ENCODE measurements at regions of chr2 and their contacts with region 1.

Region 1: DNA sequence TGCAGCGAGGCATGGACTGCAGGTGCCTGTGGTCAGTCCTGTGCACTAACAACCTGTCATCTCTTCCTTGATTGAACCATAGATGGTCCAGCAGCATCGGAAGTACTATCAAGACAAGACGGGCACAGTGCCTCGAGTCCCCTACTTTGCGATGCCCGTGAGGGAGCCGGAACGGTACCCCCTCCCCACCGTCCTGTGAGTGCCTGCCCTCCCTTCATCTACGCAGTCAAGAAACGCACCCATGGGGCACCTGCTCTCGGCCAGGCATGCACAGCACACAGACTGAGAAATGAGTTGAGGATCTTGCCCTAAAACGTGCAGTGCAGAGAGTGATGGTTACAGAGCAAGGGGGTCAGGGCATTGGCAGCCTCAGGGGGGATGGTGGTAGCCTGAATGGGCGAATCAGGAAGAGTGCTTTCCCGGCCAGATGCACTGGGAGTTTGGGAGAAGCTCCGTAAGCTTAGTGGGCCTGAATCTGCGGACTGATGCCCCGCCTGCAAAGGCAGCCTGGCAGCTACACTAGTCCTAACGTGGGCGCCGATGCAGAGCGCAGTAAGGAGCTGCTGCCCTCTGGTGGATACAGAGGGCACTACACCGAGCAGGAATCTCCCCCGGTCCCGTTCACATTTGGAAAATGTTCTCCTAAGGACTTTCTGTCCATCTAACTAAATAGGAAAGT is 63.6 kb downstream of the CIB4 start:
- DNase-seq: peak; percentile 94
- H3K4me3 ChIP-seq: peak overlapping the region in 1 of 2 experiments; percentile 2; a peak in 1 of 4 replicates
- H3K27ac ChIP-seq: no peak overlapping the region
- H3K4me1 ChIP-seq: peaks cover 0 to 3% of the 10 kb centered on the region in 2 experiments; a peak in 1 of 4 replicates
- H3K27me3 ChIP-seq: peaks cover 67% of the 10 kb centered on the region
- CTCF ChIP-seq: peak; percentile 99
- EP300 ChIP-seq: no peak
- RAD21 ChIP-seq: peak; percentile 98

Region 2: DNA sequence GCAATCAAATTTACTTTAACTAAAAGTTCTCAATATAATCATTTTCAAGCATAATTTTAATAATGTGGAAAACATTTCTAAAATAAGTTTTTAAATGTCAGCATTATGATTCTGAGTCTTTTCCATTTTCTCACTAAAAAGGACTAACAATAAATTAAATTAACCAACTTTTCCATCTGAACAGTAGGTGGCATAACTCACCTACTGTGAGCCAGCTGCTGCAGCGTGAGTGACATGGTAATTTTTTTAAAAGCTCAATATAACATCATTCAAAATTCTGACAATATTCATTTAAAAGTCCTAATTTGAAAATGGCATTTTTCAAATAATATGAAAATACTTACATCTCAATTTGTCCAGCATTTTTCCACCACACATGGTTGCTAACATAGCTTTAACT is 970.7 kb before region 1 on chr2:
- CTCF ChIA-PET with region 1: no interaction called
- POLR2A ChIA-PET with region 1: no interaction called
- DNase-seq: peak; percentile 39
- H3K4me3 ChIP-seq: no peak overlapping the region
- H3K27ac ChIP-seq: no peak overlapping the region
- H3K4me1 ChIP-seq: peaks cover 0 to 4% of the 10 kb centered on the region in 2 experiments; a peak in 1 of 4 replicates
- H3K27me3 ChIP-seq: no peaks in the 10 kb centered on the region
- CTCF ChIP-seq: peak; percentile 92
- EP300 ChIP-seq: no peak
- RAD21 ChIP-seq: peak; percentile 86

Region 3: DNA sequence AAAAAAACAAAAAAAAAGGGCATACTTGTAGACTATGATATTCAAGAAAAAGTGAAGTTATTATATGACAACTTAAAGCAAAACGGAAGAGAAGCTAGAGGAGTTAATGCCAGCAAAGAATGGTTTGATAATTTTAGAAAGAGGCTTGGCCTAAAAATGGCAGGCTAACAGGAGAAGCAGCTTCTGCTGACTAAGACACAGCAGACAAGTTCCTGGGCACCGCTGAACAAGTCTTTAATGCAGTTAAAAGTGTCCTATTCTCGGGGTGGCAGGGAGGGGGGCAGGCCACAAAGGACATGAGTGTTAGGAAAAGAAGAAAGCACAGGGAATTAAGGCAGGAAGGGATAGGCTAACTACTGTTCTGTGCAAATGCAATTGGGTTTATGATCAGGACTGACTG is 454.9 kb before region 1 on chr2:
- CTCF ChIA-PET with region 1: no interaction called
- POLR2A ChIA-PET with region 1: no interaction called
- DNase-seq: no peak
- H3K4me3 ChIP-seq: no peak overlapping the region
- H3K27ac ChIP-seq: no peak overlapping the region
- H3K4me1 ChIP-seq: peaks cover 0 to 4% of the 10 kb centered on the region in 2 experiments; a peak in 1 of 4 replicates
- H3K27me3 ChIP-seq: no peaks in the 10 kb centered on the region
- CTCF ChIP-seq: no peak
- EP300 ChIP-seq: no peak
- RAD21 ChIP-seq: no peak

Region 4: DNA sequence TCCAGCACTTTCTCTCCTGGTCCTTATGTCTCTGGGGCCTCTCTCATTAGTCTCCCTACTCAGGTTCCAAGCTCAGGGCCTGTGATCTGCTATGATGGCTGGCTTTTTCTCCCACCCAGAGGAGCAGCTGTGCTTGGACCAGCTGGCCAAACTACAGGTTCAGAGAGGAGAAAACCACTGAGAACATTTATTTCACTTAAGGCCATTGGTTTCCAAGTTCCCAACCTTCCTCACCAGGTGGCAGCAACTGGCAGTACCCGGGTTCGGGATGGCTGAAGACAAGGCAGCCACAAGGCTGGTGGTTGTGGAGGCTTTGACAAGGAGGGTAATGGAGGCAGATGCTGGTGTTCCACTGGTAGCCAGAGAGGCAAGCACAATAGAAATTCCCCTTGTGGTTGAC is 261.5 kb before region 1 on chr2:
- CTCF ChIA-PET with region 1: interaction called, 48 read pairs
- POLR2A ChIA-PET with region 1: no interaction called
- DNase-seq: peak; percentile 54
- H3K4me3 ChIP-seq: no peak overlapping the region
- H3K27ac ChIP-seq: no peak overlapping the region
- H3K4me1 ChIP-seq: peaks cover 0 to 5% of the 10 kb centered on the region in 2 experiments; a peak in 1 of 4 replicates
- H3K27me3 ChIP-seq: peaks cover 10% of the 10 kb centered on the region; the same call in 1 of the 2 replicates
- CTCF ChIP-seq: peak; percentile 39
- EP300 ChIP-seq: no peak
- RAD21 ChIP-seq: peak; percentile 51

Region 5: DNA sequence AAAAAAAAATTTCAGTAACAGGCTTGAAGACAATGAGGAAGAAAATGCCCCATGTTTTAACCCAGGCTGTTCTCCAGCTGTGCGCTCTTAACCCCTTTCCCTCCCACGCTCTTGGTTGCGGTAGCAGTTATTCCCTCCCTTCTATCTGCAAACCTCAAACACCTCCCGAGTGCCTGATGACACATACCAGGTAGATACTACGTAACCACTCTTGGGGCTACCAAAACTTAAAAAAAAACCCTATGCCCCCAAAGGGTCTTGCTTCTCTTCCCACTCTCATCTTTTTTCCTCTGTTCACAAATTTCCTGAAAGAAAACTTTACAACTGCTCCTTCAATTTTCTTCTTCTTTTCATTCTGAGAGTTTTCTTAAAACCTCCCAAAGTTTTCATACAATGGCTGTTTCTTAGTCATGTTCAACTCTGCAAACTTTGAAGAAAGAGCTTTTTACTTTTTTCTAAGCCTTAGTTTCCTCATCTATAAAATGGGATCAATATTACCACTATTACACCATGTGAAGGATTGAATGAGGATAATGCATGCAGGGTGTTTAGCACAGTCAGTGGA is 180.8 kb before region 1 on chr2:
- CTCF ChIA-PET with region 1: interaction called, 17 read pairs
- POLR2A ChIA-PET with region 1: no interaction called
- DNase-seq: no peak
- H3K4me3 ChIP-seq: no peak overlapping the region
- H3K27ac ChIP-seq: peak overlapping the region in 1 of 2 experiments; percentile 48; a peak in 1 of 4 replicates
- H3K4me1 ChIP-seq: peaks cover 0 to 38% of the 10 kb centered on the region in 2 experiments; a peak in 2 of 4 replicates
- H3K27me3 ChIP-seq: no peaks in the 10 kb centered on the region
- CTCF ChIP-seq: no peak
- EP300 ChIP-seq: no peak
- RAD21 ChIP-seq: no peak

Region 6: GRCh38 chr2:26521054-26521912 is 56.3 kb before region 1 on chr2:
- CTCF ChIA-PET with region 1: interaction called, 16 read pairs
- POLR2A ChIA-PET with region 1: no interaction called
- DNase-seq: peak; percentile 65
- H3K4me3 ChIP-seq: no peak overlapping the region
- H3K27ac ChIP-seq: no peak overlapping the region
- H3K4me1 ChIP-seq: peaks cover 6 to 7% of the 10 kb centered on the region in 2 experiments; a peak in 2 of 4 replicates
- H3K27me3 ChIP-seq: peaks cover 16% of the 10 kb centered on the region
- CTCF ChIP-seq: peak; percentile 46; the same call in 1 of the 2 replicates
- EP300 ChIP-seq: no peak
- RAD21 ChIP-seq: peak; percentile 37; the same call in 1 of the 2 replicates

Region 7: DNA sequence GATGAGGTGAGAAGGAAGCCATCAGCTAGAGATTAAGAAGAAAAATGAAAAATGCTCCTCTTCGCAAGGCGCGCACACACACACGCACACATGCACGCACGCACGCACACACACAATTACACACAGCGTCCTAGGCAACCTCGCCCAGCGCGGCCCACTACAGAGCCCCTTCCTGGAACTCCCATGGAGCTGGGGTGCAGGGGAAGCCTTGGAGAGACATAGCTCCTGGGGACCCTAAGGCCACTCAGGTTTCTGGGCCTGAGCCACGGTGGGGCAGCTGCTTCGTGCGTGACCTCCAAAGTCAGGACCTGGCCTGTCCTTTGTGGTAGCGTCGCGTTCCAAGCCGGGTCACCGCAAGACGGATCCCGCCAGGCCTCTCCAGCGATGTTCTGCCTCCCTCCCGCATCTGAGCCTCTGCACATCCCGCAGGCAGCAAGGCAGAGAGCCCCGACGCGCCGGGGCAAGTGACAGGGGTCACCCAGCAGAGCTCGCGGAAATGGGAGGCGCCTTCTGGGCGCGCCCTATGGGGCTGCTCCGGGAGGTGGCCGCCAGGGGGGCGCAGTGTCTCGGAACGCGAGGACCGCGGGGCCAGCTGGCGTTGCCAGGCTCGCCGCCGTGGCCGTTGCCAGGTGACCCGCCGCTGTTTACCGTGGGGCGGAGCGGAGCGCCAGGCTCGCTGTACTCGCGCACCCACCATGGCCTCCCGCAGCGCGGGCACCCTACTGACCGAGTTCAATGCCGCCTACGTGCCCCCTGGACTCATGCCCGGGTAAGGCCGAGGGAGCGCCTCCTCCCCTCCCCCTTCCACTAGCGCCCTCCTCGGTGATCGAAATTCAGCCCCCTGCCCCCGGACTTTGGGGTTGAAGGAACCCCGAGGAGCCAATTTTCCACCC is 15.4 kb before region 1 on chr2:
- CTCF ChIA-PET with region 1: interaction called, 153 read pairs
- POLR2A ChIA-PET with region 1: no interaction called
- DNase-seq: peak; percentile 99
- H3K4me3 ChIP-seq: peak overlapping the region; percentile 12 to 43; a peak in 3 of 4 replicates
- H3K27ac ChIP-seq: no peak overlapping the region
- H3K4me1 ChIP-seq: peaks cover 0 to 9% of the 10 kb centered on the region in 2 experiments; a peak in 1 of 4 replicates
- H3K27me3 ChIP-seq: peaks cover 85% of the 10 kb centered on the region
- CTCF ChIP-seq: peak; percentile 32; the same call in 1 of the 2 replicates
- EP300 ChIP-seq: no peak
- RAD21 ChIP-seq: peak; percentile 40

Region 8: GRCh38 chr2:26652361-26653041 is 74.9 kb after region 1 on chr2:
- CTCF ChIA-PET with region 1: interaction called, 13 read pairs
- POLR2A ChIA-PET with region 1: no interaction called
- DNase-seq: peak; percentile 92
- H3K4me3 ChIP-seq: no peak overlapping the region
- H3K27ac ChIP-seq: peak overlapping the region in 1 of 2 experiments; percentile 82; a peak in 2 of 4 replicates
- H3K4me1 ChIP-seq: peaks cover 0 to 32% of the 10 kb centered on the region in 2 experiments; a peak in 2 of 4 replicates
- H3K27me3 ChIP-seq: peaks cover 17% of the 10 kb centered on the region; the same call in 1 of the 2 replicates
- CTCF ChIP-seq: no peak
- EP300 ChIP-seq: no peak; a peak in 1 of 4 replicates
- RAD21 ChIP-seq: no peak